ENCODE measurements at regions of chr11 and their contacts with region 1.

Region 1: GRCh38 chr11:45252134-45252855 is 33.8 kb downstream of the SYT13 start:
- DNase-seq: peak; percentile 67 to 83
- H3K4me3 ChIP-seq: no peak overlapping the region
- H3K4me3 Mint-ChIP-seq: no peak overlapping the region
- H3K27ac Mint-ChIP-seq: no peak overlapping the region
- H3K4me1 ChIP-seq: no peaks in the 10 kb centered on the region
- H3K4me1 Mint-ChIP-seq: no peaks in the 10 kb centered on the region
- H3K27me3 ChIP-seq: no peaks in the 10 kb centered on the region
- H3K27me3 Mint-ChIP-seq: peaks cover 6% of the 10 kb centered on the region
- CTCF ChIP-seq: peak; percentile 82 to 91

Region 2: GRCh38 chr11:44865866-44866272 is 386.4 kb before region 1 on chr11:
- CTCF ChIA-PET with region 1: no interaction called
- POLR2A ChIA-PET with region 1: no interaction called
- intact Hi-C with region 1: no loop called
- DNase-seq: no peak
- H3K4me3 ChIP-seq: no peak overlapping the region
- H3K4me3 Mint-ChIP-seq: no peak overlapping the region
- H3K27ac Mint-ChIP-seq: no peak overlapping the region
- H3K4me1 ChIP-seq: peaks cover 16% of the 10 kb centered on the region
- H3K4me1 Mint-ChIP-seq: peaks cover 16% of the 10 kb centered on the region
- H3K27me3 ChIP-seq: no peaks in the 10 kb centered on the region
- H3K27me3 Mint-ChIP-seq: no peaks in the 10 kb centered on the region
- CTCF ChIP-seq: no peak

Region 3: DNA sequence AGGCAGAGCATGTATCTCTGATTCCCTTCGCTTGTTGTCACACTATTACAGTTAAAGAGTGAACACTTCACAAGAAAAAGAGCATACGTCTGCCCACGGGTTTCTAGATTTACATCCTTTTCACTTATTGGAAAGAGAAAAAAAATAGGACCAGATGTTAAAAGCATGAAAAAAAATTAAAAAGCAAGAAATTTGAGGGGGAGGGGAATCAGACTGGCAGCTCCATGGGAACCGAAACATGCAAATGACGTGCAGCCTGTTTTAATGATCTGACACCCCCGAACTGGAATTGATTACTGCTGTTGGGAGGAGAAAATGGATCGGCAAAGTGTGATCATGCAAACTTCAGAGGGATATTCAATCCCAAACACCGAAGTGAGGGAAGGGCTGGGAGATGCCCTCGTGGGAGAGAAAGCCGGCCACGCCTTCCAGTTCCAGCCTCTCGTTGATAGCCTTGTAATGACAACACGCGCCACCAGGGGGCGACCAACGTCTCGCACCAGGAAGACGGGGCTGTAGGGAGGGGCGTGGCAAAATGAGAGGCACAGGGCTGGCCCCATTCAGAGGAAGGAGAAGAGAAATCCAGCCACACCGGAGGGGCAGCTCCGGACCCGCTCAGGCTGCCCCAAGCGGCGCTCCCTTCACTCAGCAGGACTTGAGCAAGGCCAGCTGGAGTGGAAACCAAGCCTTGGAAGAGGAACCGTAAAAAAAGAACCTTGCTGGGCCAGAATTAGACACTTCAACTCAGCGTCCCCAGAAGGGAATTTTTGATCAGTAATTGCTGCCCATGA is 87.6 kb after region 1 on chr11:
- CTCF ChIA-PET with region 1: no interaction called
- POLR2A ChIA-PET with region 1: no interaction called
- intact Hi-C with region 1: loop called (anchors 5 kb)
- DNase-seq: peak; percentile 95 to 96
- H3K4me3 ChIP-seq: no peak overlapping the region
- H3K4me3 Mint-ChIP-seq: peak overlapping the region; percentile 25
- H3K27ac Mint-ChIP-seq: no peak overlapping the region
- H3K4me1 ChIP-seq: no peaks in the 10 kb centered on the region
- H3K4me1 Mint-ChIP-seq: peaks cover 11% of the 10 kb centered on the region
- H3K27me3 ChIP-seq: no peaks in the 10 kb centered on the region; the same call in 1 of the 2 replicates
- H3K27me3 Mint-ChIP-seq: peaks cover 23% of the 10 kb centered on the region
- CTCF ChIP-seq: peak; percentile 89

Measured in Caco-2 (cell line).